ENCODE measurements at regions of chr3 and their contacts with region 1.

Region 1: DNA sequence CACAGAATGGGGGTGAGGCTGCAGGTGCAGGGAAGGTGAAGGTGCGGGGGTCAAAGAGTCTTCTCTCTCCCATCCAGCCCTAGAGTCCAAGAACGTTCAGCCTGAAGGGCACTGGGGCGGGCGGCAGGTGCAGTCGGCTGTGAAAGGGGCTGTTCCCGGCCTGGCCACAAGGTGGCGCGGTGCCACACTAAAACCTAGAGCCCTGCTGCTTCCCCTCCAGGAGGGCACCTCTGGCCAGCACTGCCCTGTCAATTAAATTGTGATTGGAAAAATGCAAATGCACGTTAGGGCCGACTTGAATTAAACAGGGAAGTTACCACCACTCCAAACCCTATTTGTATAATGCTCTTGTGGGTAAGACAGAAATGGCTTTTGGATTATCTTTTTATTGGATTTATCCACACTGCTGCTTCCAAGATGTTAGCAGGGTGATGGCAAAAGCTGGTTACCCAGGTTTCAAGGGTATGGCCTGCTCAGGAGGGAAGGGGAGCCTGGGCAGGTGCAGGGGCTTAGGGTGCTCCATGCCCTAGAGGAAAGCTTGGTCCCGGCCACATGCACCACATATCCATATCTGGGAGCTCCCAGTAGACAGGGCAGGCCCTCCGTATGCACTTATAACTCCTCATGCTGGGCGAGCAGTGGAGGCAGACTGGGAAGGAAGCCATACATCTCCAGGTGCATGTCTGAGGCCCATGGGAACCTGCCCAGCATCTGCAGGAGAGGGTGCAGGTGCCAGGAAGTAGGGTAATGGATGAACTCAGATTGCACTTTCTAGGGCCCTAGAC is 119.8 kb downstream of the ADCY5 start:
- DNase-seq: peak; percentile 94
- H3K4me3 ChIP-seq: no peak overlapping the region
- H3K27ac ChIP-seq: peak overlapping the region; percentile 77 to 88 (median 83)
- H3K4me1 ChIP-seq: peaks cover 65 to 99% (median 88%) of the 10 kb centered on the region in 4 donors
- H3K27me3 ChIP-seq: no peaks in the 10 kb centered on the region
- CTCF ChIP-seq: peak; percentile 94 to 97 (median 95)
- EP300 ChIP-seq: no peak
- POLR2A ChIP-seq: no peak

Region 2: GRCh38 chr3:123284399-123285010 is 44.5 kb before region 1 on chr3:
- intact Hi-C with region 1: no loop called
- DNase-seq: peak; percentile 84
- H3K4me3 ChIP-seq: no peak overlapping the region
- H3K27ac ChIP-seq: peak overlapping the region in 1 of 4 donors; percentile 34
- H3K4me1 ChIP-seq: peaks cover 0 to 3% (median 0%) of the 10 kb centered on the region in 4 donors
- H3K27me3 ChIP-seq: no peaks in the 10 kb centered on the region
- CTCF ChIP-seq: no peak
- EP300 ChIP-seq: no peak
- POLR2A ChIP-seq: no peak

Region 3: DNA sequence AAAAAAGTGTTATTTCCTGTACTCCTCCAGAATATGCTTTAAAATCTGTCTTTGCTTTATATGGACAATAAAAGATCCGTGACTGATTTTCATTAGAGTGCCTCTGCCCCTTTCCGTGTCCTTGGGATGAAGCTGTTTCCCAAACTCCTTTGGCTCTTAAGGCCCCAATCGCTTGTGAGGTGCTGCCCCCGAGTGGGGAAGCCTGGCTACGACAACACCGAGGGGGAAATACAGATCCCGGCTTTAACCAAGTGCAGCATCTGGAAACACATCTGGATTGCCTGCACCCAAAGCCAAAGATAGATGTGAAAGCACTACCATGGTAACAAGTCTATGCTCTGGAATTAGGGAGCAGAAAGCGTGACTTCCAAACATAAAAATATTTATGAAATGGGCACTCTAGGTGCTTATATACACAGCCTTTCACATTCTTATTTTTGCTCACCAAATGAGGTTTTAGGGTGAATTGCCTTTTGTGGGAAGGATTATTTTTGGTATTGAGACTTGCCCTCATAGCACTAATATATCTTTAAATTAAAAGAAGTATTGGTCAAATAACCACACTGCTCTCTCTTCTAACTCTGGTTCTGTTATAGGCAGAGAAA is 160.5 kb after region 1 on chr3:
- intact Hi-C with region 1: loop called (anchors 2 kb)
- DNase-seq: no peak
- H3K4me3 ChIP-seq: no peak overlapping the region
- H3K27ac ChIP-seq: peak overlapping the region; percentile 60 to 74 (median 68)
- H3K4me1 ChIP-seq: peaks cover 19 to 37% (median 29%) of the 10 kb centered on the region in 4 donors
- H3K27me3 ChIP-seq: no peaks in the 10 kb centered on the region
- CTCF ChIP-seq: peak; percentile 91 to 95 (median 91)
- EP300 ChIP-seq: no peak
- POLR2A ChIP-seq: no peak

Measured in esophagus muscularis mucosa (tissue), 4 donors.